Sciatic nerve (tissue), 2 donors: ENCODE measurements at regions of chr1 and their contacts with region 1.

Region 1: DNA sequence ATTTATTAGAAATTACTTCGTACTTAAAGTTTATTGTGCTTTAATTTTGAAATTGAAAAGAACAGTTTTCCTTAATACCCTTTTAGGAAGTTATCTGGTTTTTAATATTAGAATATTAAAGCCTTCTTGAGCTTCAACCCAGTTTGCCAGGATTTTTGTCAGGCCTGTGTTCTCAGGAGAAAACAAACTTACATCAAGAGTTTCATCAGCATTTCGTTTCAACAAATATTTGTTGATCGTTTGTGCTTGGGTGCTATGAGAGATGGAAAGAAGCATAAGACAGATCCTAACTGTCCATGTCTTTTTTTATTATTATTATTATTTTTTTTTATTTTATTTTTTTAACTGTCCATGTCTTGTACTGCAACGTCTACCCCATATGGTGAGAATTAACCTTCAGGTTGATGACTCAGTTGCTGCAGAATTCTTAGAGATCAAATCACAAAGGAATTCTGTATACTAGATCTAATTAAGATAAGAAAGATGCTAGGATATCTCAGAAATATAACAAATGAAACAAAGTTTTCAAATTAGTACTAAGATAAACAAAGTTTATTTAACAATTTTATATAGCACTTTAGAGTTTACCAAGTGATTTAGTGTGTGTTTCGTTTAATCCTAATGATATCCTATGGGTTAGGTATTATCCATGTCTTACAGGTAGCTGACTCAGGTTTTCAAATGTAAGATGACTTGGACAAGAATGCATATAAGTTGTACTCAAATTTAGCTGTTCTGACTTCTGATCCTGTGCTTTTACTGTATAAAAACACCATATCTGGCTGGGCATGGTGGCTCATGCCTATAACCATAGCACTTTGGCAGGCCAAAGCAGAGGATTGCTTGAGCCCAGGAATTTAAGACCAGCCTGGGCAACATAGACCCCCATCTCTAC is 14.3 kb downstream of the FBXO28 start:
- DNase-seq: no peak
- ATAC-seq: no peak

Region 2: GRCh38 chr1:224217655-224218623 is 89.8 kb after region 1 on chr1:
- intact Hi-C with region 1: loop called (anchors 5 kb)
- DNase-seq: no peak
- ATAC-seq: no peak